Ovary (tissue), 10 donors: ENCODE measurements at regions of chr16 and their contacts with region 1.

Region 1: GRCh38 chr16:30526823-30527635 is 663 bp upstream of the ZNF768 start:
- DNase-seq: peak; percentile 99
- H3K4me3 ChIP-seq: peak overlapping the region; percentile 68
- H3K27ac ChIP-seq: peak overlapping the region; percentile 96 to 97
- H3K4me1 ChIP-seq: peaks cover 4% of the 10 kb centered on the region
- H3K27me3 ChIP-seq: no peaks in the 10 kb centered on the region
- CTCF ChIP-seq: peak in 2 of 3 donors; percentile 51 to 55
- EP300 ChIP-seq: no peak
- POLR2A ChIP-seq: peak; percentile 68

Region 2: GRCh38 chr16:30082545-30083090 is 444.4 kb before region 1 on chr16:
- intact Hi-C with region 1: loop called in 1 of 4 experiments (anchors 10 kb)
- DNase-seq: no peak
- H3K4me3 ChIP-seq: no peak overlapping the region
- H3K27ac ChIP-seq: no peak overlapping the region
- H3K4me1 ChIP-seq: no peaks in the 10 kb centered on the region
- H3K27me3 ChIP-seq: no peaks in the 10 kb centered on the region
- CTCF ChIP-seq: no peak
- EP300 ChIP-seq: no peak
- POLR2A ChIP-seq: no peak

Region 3: DNA sequence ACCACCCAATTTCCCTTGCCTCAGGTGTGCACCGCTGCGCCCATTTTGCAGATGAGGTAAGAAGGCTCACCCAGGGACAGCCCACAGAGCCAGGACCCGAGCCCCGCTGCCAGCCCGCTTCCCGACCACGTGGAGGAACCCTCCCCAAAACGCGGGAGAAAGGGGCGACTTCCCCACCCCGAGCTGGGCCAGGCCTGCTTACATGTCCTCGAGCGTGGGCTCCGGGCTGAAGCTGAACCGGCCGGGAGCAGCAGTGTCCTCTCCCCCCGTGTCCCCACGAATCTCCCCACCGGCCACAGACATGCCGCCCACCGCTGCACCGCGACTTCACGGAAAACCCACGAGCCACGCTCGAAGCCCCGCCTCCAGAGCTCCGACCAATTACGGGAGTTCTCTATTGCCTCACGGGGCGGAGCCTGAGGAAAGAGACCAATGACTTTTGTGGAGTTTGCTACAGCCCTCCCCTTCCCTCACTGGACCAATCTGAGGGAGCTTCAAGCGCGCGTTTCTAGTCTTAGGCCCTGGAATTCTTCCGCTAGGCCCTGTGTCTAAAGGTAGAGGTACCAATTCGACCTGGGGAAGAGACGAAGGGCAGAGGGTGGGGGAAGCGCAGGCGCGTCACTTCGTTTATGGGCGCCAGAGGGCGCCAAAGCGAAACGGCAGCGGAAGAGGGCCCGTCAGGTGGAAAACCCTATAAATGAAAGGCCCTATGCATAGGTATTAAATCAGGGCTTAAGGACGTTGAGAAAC is 97.2 kb before region 1 on chr16 and contains the start of gene DCTPP1:
- intact Hi-C with region 1: loop called in 2 of 4 experiments (anchors 5 to 10 kb)
- DNase-seq: peak; percentile 92 to 97 (median 94)
- H3K4me3 ChIP-seq: peak within 1 kb of the TSS; percentile 57
- H3K27ac ChIP-seq: peak within 1 kb of the TSS in 1 of 2 donors; percentile 71
- H3K4me1 ChIP-seq: peaks cover 7% of the 10 kb centered on the region
- H3K27me3 ChIP-seq: no peaks in the 10 kb centered on the region
- CTCF ChIP-seq: peak; percentile 61 to 91 (median 83)
- EP300 ChIP-seq: no peak
- POLR2A ChIP-seq: peak; percentile 22
- total RNA-seq, gene DCTPP1: 13.2 to 34.4 (median 22.9) TPM

Region 4: GRCh38 chr16:30437486-30438046 is 89.5 kb before region 1 on chr16:
- intact Hi-C with region 1: loop called in 2 of 4 experiments (anchors 5 to 10 kb)
- DNase-seq: no peak
- H3K4me3 ChIP-seq: no peak overlapping the region
- H3K27ac ChIP-seq: no peak overlapping the region
- H3K4me1 ChIP-seq: no peaks in the 10 kb centered on the region
- H3K27me3 ChIP-seq: no peaks in the 10 kb centered on the region
- CTCF ChIP-seq: no peak
- EP300 ChIP-seq: no peak
- POLR2A ChIP-seq: no peak